GM13976 (cell line): ENCODE measurements at regions of chr2 and their contacts with region 1.

Region 1: DNA sequence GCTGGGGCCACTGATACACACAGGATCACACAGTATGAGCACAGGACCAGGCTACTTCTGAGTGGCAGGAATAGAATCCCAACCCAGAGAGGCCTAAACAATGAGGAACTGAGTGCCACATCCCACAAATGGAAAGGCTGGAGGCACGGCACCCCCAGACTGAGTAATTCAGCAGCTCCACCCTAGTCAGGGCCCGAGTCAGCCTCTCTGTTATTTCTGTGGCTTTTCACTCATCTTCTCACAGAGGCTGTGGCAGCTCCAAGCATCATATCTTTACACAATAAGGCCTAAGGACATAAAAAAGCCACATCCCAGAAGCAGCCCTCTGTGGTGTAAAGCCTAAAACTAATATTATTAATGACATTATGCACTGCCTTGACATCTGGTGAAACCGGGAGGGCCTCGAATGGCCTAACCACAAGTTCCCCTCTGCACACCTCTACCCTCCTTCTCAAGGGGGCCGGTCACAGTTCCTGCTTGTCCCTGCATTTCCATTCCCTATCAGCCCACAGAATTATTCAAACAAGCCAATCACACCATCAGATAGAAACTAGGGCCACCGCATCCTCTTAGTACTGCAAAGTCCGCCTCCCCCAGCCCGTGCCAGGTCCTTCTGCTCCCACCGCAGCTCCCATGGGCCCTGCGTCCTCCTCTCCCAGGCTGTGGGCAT is 12.5 kb upstream of the MAL start:
- DNase-seq: no peak
- CTCF ChIP-seq: no peak

Region 2: GRCh38 chr2:95076784-95077529 is 63.9 kb after region 1 on chr2:
- in situ Hi-C with region 1: loop called (anchors 10 kb)
- DNase-seq: peak; percentile 89
- CTCF ChIP-seq: peak; percentile 92

Region 3: DNA sequence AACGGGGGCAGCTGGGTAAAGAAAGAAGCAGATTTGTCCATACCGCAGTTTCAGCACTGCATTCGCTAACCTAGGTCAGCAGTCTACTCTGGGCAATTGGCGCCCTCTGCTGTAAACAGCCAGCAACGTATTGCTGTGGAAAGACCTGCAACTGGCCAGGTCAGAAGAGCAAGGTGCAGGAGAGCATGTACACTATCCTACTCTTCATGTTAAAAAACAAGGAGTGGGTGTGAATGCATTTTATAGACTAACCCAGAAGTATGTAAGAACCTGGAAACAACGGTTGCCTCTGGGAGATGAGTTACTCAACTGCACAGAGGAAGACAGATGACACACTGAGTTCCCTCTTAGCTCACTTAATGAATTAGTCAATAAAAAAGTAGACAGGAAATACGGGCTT is 102.4 kb after region 1 on chr2:
- in situ Hi-C with region 1: loop called (anchors 10 kb)
- DNase-seq: peak; percentile 75
- CTCF ChIP-seq: peak; percentile 86

Region 4: GRCh38 chr2:95179451-95179850 is 166.4 kb after region 1 on chr2:
- in situ Hi-C with region 1: no loop called
- DNase-seq: no peak
- CTCF ChIP-seq: no peak